HepG2 (cell line): ENCODE measurements at regions of chr14 and their contacts with region 1.

Region 1: DNA sequence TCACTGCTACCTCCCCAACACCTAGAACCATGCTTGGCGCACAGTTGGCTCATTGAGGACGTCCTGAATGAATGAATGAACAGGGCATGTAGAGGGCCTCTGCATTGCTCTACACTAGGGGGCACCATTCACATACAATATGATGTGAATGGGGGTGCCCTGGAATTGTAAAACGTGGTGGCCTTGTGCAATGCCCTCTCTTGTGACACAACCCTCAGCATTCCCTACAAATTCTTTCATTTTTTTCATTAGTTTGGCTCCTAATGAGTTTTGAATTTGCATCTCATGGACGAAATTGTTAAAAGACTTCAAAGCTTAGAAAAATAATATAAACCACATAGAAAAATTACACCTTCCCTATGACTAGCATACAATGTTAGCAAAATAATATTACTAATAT is 2.3 kb upstream of the DIO2 start:
- DNase-seq: peak; percentile 47
- ATAC-seq: peak; percentile 93
- H3K4me3 ChIP-seq: no peak overlapping the region
- H3K27ac ChIP-seq: no peak overlapping the region
- H3K4me1 ChIP-seq: no peaks in the 10 kb centered on the region
- H3K27me3 ChIP-seq: no peaks in the 10 kb centered on the region; a peak in 1 of 5 replicates
- CTCF ChIP-seq: peak; percentile 74
- EP300 ChIP-seq: no peak
- POLR2A ChIP-seq: no peak
- RAD21 ChIP-seq: peak; percentile 55; the same call in 1 of the 2 replicates

Region 2: GRCh38 chr14:80346395-80346794 is 132.8 kb after region 1 on chr14:
- CTCF ChIA-PET with region 1: no interaction called
- POLR2A ChIA-PET with region 1: no interaction called
- in situ Hi-C with region 1: no loop called
- intact Hi-C with region 1: loop called (anchors 10 kb)
- DNase-seq: no peak
- ATAC-seq: no peak
- H3K4me3 ChIP-seq: no peak overlapping the region
- H3K27ac ChIP-seq: no peak overlapping the region
- H3K4me1 ChIP-seq: no peaks in the 10 kb centered on the region
- H3K27me3 ChIP-seq: no peaks in the 10 kb centered on the region
- CTCF ChIP-seq: no peak
- EP300 ChIP-seq: no peak
- POLR2A ChIP-seq: no peak
- RAD21 ChIP-seq: no peak

Region 3: DNA sequence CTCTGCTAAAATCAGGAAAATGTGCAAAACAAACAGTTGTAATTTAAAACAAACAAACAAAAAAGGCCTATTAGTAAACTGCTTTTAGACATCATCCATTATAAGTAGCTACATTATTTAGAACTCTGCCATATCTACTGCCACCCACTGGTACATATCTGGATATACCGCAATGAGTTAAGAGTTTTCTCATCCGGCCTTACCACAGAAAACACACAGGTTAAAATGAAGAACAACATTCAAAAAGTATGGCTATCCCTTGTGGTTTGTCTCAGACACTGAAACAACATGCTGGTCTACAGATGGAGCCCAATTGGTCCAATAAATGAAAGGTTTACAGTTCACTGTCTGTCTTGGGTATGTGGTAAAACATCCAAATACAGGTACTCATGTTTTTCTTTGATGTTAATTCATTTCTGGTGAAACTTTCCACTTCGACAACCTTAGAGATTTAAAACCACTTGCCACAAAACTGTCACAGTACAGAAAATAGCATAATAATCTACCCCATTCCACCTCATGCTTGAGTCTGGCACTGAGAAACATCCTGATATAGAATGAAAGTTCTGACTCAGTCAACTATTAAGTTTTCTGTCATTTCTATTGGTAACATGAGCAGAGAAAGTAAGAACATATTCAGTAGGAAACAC is 373.6 kb after region 1 on chr14:
- CTCF ChIA-PET with region 1: interaction called, 3 read pairs
- POLR2A ChIA-PET with region 1: no interaction called
- in situ Hi-C with region 1: loop called (anchors 25 kb)
- intact Hi-C with region 1: loop called (anchors 1 kb)
- DNase-seq: peak; percentile 30
- ATAC-seq: peak; percentile 74
- H3K4me3 ChIP-seq: no peak overlapping the region
- H3K27ac ChIP-seq: no peak overlapping the region
- H3K4me1 ChIP-seq: peaks cover 4% of the 10 kb centered on the region; the same call in 1 of the 2 replicates
- H3K27me3 ChIP-seq: no peaks in the 10 kb centered on the region
- CTCF ChIP-seq: peak; percentile 53
- EP300 ChIP-seq: no peak
- POLR2A ChIP-seq: no peak
- RAD21 ChIP-seq: no peak